ENCODE measurements at regions of chr20 and their contacts with region 1.

Region 1: GRCh38 chr20:32779500-32780211 is 17.5 kb downstream of the DNMT3B start:
- DNase-seq: no peak
- ATAC-seq: no peak
- H3K4me3 ChIP-seq: no peak overlapping the region
- H3K27ac ChIP-seq: no peak overlapping the region
- H3K4me1 ChIP-seq: peaks cover 13% of the 10 kb centered on the region in 2 experiments; a peak in 3 of 4 replicates
- H3K27me3 ChIP-seq: no peaks in the 10 kb centered on the region
- CTCF ChIP-seq: no peak
- POLR2A ChIP-seq: no peak
- RAD21 ChIP-seq: no peak

Region 2: GRCh38 chr20:32664678-32665159 is 114.9 kb before region 1 on chr20:
- CTCF ChIA-PET with region 1: interaction called, 16 read pairs
- POLR2A ChIA-PET with region 1: no interaction called
- RAD21 ChIA-PET with region 1: interaction called in 1 of 2 experiments, 3 read pairs
- intact Hi-C with region 1: no loop called
- DNase-seq: no peak
- ATAC-seq: peak; percentile 13
- H3K4me3 ChIP-seq: no peak overlapping the region
- H3K27ac ChIP-seq: peak overlapping the region; percentile 49
- H3K4me1 ChIP-seq: peaks cover 11 to 15% of the 10 kb centered on the region in 2 experiments
- H3K27me3 ChIP-seq: no peaks in the 10 kb centered on the region
- CTCF ChIP-seq: no peak
- POLR2A ChIP-seq: no peak
- RAD21 ChIP-seq: no peak

Region 3: DNA sequence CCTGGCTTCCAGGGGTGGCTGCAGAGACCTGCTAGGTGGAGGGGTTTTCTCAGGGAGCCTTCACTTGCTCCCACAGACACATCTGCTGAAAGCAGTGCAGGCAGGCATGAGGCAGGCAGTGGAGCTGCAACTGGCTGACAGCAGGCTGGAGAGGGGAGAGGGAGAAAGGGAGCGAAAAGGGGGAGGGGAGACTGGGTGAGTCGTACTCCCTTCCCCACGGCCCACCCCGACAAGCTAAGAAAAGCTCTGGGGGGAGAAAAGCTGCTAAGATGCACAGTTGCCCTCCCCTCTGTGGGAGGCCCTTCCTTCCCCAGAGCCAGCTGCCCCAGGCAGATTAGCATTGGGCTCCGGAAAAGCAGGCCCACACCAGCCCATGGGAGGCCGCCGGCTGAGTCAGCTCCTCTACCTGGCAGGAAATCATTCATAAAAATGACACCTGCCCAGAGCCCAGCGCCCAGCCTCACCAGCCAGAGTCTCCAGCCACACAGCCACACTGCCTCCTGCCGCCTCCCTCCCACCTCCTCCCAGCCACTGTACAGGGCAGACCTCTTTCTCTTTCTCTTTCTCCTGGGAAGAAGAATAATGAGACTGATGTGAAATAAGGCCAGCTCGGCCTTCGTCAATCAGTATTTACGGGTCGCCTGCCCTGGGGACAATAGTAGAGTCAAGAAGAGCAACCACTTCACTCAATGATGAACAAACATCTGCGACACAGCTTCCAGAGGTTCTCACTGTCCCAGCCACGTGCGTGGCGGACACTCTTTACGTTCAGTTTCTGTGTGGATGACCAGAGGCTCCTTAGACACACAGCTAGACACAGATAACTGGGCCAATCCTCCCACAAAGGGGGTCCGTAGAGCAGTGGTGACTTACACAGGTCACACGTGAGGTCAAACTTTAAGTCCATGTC is 98.2 kb before region 1 on chr20:
- CTCF ChIA-PET with region 1: interaction called, 19 read pairs
- POLR2A ChIA-PET with region 1: interaction called, 3 read pairs
- RAD21 ChIA-PET with region 1: no interaction called
- intact Hi-C with region 1: no loop called
- DNase-seq: no peak
- ATAC-seq: peak; percentile 75
- H3K4me3 ChIP-seq: no peak overlapping the region
- H3K27ac ChIP-seq: no peak overlapping the region
- H3K4me1 ChIP-seq: peaks cover 11 to 23% of the 10 kb centered on the region in 2 experiments
- H3K27me3 ChIP-seq: no peaks in the 10 kb centered on the region
- CTCF ChIP-seq: no peak
- POLR2A ChIP-seq: no peak
- RAD21 ChIP-seq: no peak

Region 4: GRCh38 chr20:32718731-32719348 is 60.8 kb before region 1 on chr20:
- CTCF ChIA-PET with region 1: no interaction called
- POLR2A ChIA-PET with region 1: no interaction called
- RAD21 ChIA-PET with region 1: no interaction called
- intact Hi-C with region 1: no loop called
- DNase-seq: no peak
- ATAC-seq: no peak
- H3K4me3 ChIP-seq: no peak overlapping the region
- H3K27ac ChIP-seq: no peak overlapping the region
- H3K4me1 ChIP-seq: peaks cover 0 to 4% of the 10 kb centered on the region in 2 experiments; a peak in 3 of 4 replicates
- H3K27me3 ChIP-seq: no peaks in the 10 kb centered on the region
- CTCF ChIP-seq: no peak
- POLR2A ChIP-seq: no peak
- RAD21 ChIP-seq: no peak

Region 5: DNA sequence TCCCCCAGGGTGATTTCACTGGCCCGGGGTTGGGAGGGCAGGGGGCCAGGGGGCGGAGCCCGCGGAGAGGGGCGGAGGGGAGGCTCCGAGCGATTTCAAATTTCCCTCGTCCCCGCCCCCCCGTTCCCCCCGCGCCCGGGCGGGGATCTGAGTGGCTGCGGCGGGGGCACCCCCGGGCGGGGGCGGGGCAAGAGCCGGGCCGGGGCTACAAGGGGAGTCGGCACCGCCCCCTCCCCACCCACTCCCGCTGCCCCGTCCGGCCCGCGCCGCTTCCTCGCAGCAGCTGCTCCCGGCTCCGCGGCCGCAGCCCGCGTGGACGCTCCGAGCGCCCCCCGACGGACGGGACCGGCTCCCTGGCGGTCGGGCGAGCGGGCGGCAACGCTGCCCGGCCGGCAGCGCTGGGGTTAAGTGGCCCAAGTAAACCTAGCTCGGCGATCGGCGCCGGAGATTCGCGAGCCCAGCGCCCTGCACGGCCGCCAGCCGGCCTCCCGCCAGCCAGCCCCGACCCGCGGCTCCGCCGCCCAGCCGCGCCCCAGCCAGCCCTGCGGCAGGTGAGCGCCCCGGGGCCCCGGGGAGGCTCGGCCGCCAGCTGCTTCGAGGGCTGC is 17.4 kb before region 1 on chr20 and contains the start of gene DNMT3B:
- CTCF ChIA-PET with region 1: interaction called, 47 read pairs
- POLR2A ChIA-PET with region 1: interaction called, 9 read pairs
- RAD21 ChIA-PET with region 1: interaction called, 3 read pairs
- intact Hi-C with region 1: no loop called
- DNase-seq: peak; percentile 41
- ATAC-seq: peak; percentile 81
- H3K4me3 ChIP-seq: peak within 1 kb of the TSS; percentile 94 to 96
- H3K27ac ChIP-seq: peak within 1 kb of the TSS; percentile 83
- H3K4me1 ChIP-seq: peaks cover 40 to 62% of the 10 kb centered on the region in 2 experiments
- H3K27me3 ChIP-seq: no peaks in the 10 kb centered on the region
- CTCF ChIP-seq: no peak
- POLR2A ChIP-seq: peak; percentile 78
- RAD21 ChIP-seq: no peak
- total RNA-seq, gene DNMT3B: 22.2 TPM